Lower leg skin (tissue), 4 donors: ENCODE measurements at regions of chr2 and their contacts with region 1.

Region 1: GRCh38 chr2:30711646-30712085 is 95.6 kb downstream of the CAPN13 start:
- DNase-seq: peak; percentile 85 to 92
- H3K4me3 ChIP-seq: no peak overlapping the region
- CTCF ChIP-seq: peak in 2 of 3 donors; percentile 85 to 96
- POLR2A ChIP-seq: no peak

Region 2: DNA sequence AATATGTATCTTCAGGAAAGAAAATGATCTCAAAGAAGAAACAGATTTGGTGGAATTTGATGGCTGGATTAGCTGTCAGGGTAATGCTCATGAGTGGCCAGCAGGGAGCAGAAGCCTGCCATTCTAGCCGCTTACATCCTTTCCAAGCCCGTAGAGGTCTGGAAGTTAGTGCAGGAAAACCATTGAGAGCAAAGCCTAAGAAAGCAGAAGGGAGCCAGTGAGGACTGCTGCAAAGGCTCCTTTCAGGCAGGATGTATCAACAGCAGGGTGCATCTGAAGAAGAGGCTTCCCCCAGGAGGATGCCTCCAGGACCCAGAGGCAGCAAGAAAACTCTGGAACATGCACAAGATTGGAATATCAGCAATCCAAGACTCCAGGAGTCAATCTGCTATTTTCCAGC is 503.2 kb before region 1 on chr2:
- intact Hi-C with region 1: loop called (anchors 2 kb)
- DNase-seq: peak in 1 of 2 donors; percentile 87
- H3K4me3 ChIP-seq: no peak overlapping the region
- CTCF ChIP-seq: peak in 1 of 3 donors; percentile 61
- POLR2A ChIP-seq: no peak

Region 3: DNA sequence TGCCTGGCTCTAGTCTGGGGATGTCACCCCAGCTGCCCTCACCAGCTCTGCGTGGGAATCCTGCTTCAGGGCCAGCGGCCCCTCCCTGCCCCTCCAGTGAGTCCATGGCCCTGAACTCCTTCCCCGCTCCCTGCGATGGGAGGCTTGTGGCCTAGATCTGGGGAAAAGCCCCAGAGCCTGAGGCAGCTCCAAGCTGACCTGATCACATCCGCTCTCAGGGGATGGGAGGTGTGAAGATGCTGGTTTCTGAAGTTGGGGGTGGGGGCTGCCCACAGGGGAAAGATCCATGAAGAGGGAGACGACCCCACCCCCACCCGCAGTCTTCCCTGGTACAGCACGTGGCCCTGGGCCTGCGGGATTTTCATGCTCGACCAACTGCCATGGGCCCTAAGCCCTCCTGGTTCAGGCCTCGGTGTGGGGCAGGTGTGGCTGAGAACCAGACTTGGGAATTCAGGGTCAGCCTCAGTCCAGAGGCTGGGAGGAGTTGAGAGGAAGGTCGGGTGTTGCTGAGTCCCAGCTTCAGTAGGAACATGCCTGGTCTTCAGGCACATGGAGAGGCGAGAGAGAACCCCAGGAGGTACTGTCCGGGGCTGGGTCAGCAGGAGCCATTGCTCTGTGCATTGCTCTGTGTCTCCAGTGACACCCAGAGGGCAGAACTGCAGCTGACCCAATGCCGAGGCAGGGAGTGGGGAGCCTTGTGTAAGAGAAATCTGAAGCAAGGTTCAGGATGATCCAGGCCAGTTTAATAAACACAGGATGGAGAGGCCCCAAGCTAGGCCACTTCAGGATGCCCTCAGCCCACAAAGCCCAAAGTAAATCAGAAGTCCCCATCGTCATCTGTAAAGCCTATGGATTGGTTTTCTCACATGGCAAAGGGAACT is 19.5 kb before region 1 on chr2:
- intact Hi-C with region 1: no loop called
- DNase-seq: peak in 1 of 2 donors; percentile 81
- H3K4me3 ChIP-seq: no peak overlapping the region
- CTCF ChIP-seq: no peak
- POLR2A ChIP-seq: no peak

Region 4: GRCh38 chr2:31335921-31336570 is 624.4 kb after region 1 on chr2:
- intact Hi-C with region 1: loop called (anchors 5 kb)
- DNase-seq: no peak
- H3K4me3 ChIP-seq: no peak overlapping the region
- CTCF ChIP-seq: no peak
- POLR2A ChIP-seq: no peak

Region 5: DNA sequence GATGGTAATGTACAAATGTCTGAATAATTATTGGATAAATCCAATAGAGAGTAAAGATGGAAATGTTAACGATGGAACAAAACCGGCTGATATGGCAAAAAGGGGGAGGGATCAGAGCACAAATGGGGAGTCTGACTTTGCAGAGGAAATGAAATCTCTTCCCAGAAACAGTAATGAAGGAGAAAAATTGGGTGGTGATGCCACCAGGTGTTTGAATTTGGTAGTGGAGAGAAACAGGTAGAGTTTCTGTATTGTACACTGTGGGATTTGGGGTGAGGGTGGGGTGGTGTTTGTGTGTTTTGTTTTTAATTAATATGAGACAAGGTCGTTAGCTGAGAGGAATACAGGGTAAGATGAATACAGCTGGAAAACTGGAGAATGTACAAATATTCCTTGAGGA is 723.2 kb after region 1 on chr2:
- intact Hi-C with region 1: loop called (anchors 10 kb)
- DNase-seq: no peak
- H3K4me3 ChIP-seq: no peak overlapping the region
- CTCF ChIP-seq: no peak
- POLR2A ChIP-seq: no peak